AG04450 (cell line): ENCODE measurements at regions of chr21 and their contacts with region 1.

Region 1: DNA sequence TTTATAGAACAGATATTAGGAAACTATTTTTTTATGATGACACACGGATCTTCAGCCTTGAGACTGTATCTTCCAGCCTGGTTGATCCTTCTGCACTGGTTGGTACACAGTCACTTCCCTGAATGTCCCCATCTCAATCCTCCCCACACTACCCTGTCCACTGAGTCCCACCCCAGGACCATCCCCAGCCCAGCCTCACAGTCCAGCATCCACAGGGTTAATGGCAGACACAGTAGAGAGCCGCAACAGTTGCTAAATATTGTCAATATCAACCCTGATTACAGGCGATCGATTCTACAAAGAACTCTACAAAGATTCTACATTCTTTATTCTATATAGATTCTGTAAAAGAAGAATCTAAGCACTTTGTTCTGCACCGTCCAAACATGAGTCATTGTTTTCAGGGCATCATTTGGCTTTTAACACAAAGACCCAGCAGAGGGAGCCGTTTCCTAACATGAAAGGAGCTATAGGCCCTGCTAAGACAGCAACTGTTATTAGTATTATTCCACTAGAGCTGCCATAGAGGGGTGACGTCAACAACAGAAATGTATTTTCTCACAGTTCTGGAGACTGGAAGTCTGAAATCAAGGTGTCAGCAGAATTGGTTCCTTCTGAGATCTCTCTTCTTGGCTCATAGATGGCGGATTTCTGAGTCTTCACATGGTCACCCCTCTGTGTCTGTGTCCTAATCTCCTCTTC is 30.1 kb upstream of the IFNAR2 start:
- DNase-seq: peak; percentile 82
- H3K4me3 ChIP-seq: no peak overlapping the region
- H3K27ac ChIP-seq: no peak overlapping the region
- H3K27me3 ChIP-seq: peaks cover 2% of the 10 kb centered on the region
- CTCF ChIP-seq: peak; percentile 87

Region 2: DNA sequence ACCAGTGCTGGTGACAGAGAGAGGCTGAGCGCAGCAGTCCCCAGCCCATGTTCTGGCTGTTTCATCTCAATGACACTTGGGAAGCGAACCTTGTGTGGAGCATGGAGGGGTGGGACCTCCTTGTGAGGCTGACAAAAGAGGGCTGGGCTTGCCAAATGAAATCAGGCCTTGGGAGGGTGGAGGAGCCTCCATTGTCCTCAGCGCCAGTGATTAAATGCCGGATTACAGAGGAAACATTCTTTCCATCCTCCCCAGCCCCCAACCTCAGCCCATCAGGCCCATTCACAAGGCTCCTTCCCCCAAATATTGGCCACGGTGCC is 364.8 kb before region 1 on chr21:
- CTCF ChIA-PET with region 1: interaction called, 29 read pairs
- POLR2A ChIA-PET with region 1: no interaction called
- DNase-seq: no peak
- H3K4me3 ChIP-seq: no peak overlapping the region
- H3K27ac ChIP-seq: no peak overlapping the region
- H3K27me3 ChIP-seq: peaks cover 16% of the 10 kb centered on the region
- CTCF ChIP-seq: no peak

Region 3: DNA sequence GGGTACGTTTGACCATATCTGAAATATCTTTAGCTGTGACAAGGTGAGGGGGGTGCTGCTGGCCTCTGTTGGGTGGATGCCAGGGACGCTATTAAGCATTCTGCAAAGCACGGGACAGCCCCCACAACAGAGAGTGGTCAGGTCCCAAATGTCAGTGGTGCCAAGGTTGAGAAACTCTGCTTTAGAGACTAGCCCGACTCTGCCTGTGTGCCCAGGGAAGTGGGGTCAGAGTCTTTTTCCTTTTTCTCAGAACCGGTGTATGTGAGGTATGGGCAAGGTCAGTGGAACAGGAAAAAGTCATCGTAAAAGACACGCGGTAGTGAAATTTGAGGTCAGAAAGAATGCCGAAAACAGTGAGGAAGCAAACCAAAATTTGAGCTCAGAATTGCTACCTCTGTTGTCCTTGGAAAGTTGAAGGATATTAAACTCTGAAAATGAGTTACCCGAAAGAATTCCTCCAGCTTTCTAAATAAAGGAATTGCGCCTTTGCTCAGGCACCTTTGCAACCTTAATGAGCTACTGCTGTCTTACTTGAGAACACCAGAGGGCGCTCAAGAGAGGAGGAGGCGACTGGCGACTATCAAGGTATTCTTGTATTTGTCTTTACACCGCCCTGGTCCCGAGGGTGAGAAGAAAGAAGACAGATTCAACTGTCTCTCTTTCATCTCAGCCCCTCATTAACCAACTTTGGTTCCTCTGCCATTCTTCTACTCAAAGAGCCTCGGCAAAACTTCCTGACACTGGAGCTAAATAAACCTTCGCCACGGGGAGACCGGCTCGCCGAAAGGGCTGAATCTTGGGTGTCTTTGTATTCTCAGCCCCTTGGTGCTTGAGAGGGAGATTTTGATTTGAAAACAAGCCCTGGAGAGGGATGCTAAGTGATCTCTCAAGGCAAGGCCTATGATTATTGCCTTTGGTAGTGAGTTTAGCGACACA is 259.3 kb before region 1 on chr21:
- CTCF ChIA-PET with region 1: interaction called, 47 read pairs
- POLR2A ChIA-PET with region 1: no interaction called
- DNase-seq: peak; percentile 3
- H3K4me3 ChIP-seq: no peak overlapping the region
- H3K27ac ChIP-seq: no peak overlapping the region
- H3K27me3 ChIP-seq: peaks cover 2% of the 10 kb centered on the region
- CTCF ChIP-seq: peak; percentile 84

Region 4: GRCh38 chr21:32994305-32994704 is 205.4 kb before region 1 on chr21:
- CTCF ChIA-PET with region 1: interaction called, 64 read pairs
- POLR2A ChIA-PET with region 1: no interaction called
- DNase-seq: no peak
- H3K4me3 ChIP-seq: no peak overlapping the region
- H3K27ac ChIP-seq: no peak overlapping the region
- H3K27me3 ChIP-seq: peaks cover 12% of the 10 kb centered on the region
- CTCF ChIP-seq: peak; percentile 65

Region 5: GRCh38 chr21:33157303-33157702 is 42.4 kb before region 1 on chr21:
- CTCF ChIA-PET with region 1: no interaction called
- POLR2A ChIA-PET with region 1: no interaction called
- DNase-seq: no peak
- H3K4me3 ChIP-seq: no peak overlapping the region
- H3K27ac ChIP-seq: no peak overlapping the region
- H3K27me3 ChIP-seq: peaks cover 10% of the 10 kb centered on the region
- CTCF ChIP-seq: no peak

Region 6: GRCh38 chr21:33174756-33175155 is 24.9 kb before region 1 on chr21:
- CTCF ChIA-PET with region 1: no interaction called
- POLR2A ChIA-PET with region 1: no interaction called
- DNase-seq: no peak
- H3K4me3 ChIP-seq: no peak overlapping the region
- H3K27ac ChIP-seq: no peak overlapping the region
- H3K27me3 ChIP-seq: peaks cover 16% of the 10 kb centered on the region
- CTCF ChIP-seq: no peak

Region 7: GRCh38 chr21:33396947-33397346 is 197.3 kb after region 1 on chr21:
- CTCF ChIA-PET with region 1: interaction called, 11 read pairs
- POLR2A ChIA-PET with region 1: no interaction called
- DNase-seq: no peak
- H3K4me3 ChIP-seq: no peak overlapping the region
- H3K27ac ChIP-seq: peak overlapping the region; percentile 39
- H3K27me3 ChIP-seq: no peaks in the 10 kb centered on the region
- CTCF ChIP-seq: no peak

Region 8: DNA sequence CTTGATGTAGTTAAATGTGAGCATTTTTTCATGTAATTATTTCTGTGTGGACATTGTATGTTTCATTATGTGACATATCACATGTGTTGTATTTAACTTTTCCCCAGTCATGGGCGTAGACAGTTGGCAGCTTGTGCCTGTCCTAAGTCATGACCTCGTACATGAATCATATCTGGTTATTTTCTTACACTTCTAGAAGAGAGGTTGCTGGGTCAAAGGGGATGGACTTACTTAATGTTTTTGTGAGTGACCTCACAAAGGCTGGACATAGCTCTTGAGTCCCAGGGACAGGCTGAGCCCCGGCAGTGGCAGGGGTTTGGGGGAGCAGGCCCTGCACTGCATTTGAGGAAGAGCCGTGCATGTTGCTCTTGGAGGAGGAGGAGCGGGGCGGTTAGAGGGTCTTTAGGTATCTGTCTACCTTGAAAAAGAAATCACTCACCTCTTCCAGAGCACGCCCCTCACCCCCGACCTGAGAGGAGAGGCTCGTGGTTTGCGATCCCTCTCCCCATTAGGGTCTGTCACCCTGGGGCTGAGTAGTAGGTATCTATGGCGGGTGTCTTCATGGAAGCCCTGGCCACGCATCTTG is 220.0 kb after region 1 on chr21:
- CTCF ChIA-PET with region 1: no interaction called
- POLR2A ChIA-PET with region 1: no interaction called
- DNase-seq: no peak
- H3K4me3 ChIP-seq: no peak overlapping the region
- H3K27ac ChIP-seq: no peak overlapping the region
- H3K27me3 ChIP-seq: no peaks in the 10 kb centered on the region
- CTCF ChIP-seq: no peak

Region 9: DNA sequence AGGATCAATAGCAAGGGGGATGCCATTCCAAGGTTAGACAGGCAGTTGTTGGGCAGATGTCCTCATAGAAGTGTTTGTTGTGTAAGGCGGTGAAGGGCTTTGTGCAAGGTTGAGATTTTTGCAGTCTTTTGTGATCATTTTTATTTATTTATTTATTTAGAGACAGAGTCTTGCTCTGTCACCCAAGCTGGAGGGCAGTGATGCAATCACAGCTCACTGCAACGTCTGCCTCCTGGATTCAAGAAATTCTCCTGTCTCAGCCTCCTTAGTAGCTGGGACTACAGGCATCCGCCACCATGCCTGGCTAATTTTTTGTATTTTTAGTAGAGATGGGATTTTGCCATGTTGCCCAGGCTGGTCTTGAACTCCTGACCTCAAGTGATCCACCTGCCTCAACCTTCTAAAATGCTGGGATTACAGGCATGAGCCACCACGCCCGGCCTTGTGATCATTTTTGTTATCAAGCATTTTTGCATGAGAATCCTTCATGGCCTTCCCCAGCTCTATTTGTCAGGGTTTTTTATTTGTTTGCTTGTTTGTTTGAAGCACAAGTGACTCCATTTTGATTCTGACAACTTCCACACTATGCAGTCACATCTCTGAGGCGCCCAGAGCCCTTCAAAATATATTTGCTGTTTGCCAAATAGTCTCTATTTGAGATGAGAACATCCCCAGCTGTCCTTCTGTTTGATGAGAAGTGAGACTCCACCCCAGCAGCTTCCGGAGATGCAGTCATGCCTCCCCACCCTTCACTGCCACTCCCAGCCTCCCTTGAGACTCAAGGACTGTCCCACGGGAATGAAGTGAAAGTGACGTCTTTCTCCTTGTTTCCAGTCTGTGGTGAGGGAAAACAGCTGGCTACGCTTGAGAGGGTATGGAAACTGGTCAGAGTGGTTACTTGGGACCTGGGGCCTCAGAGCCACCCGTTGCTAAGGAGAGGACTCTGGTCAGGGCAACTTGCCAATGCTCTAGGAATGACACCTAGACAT is 242.1 kb after region 1 on chr21:
- CTCF ChIA-PET with region 1: interaction called, 144 read pairs
- POLR2A ChIA-PET with region 1: no interaction called
- DNase-seq: peak; percentile 51
- H3K4me3 ChIP-seq: no peak overlapping the region
- H3K27ac ChIP-seq: peak overlapping the region; percentile 43
- H3K27me3 ChIP-seq: no peaks in the 10 kb centered on the region
- CTCF ChIP-seq: no peak

Region 10: GRCh38 chr21:33478182-33478581 is 278.5 kb after region 1 on chr21:
- CTCF ChIA-PET with region 1: no interaction called
- POLR2A ChIA-PET with region 1: no interaction called
- DNase-seq: no peak
- H3K4me3 ChIP-seq: peak overlapping the region; percentile 77
- H3K27ac ChIP-seq: no peak overlapping the region
- H3K27me3 ChIP-seq: no peaks in the 10 kb centered on the region
- CTCF ChIP-seq: no peak